Heart right ventricle (tissue), 16 donors: ENCODE measurements at regions of chr9 and their contacts with region 1.

Region 1: DNA sequence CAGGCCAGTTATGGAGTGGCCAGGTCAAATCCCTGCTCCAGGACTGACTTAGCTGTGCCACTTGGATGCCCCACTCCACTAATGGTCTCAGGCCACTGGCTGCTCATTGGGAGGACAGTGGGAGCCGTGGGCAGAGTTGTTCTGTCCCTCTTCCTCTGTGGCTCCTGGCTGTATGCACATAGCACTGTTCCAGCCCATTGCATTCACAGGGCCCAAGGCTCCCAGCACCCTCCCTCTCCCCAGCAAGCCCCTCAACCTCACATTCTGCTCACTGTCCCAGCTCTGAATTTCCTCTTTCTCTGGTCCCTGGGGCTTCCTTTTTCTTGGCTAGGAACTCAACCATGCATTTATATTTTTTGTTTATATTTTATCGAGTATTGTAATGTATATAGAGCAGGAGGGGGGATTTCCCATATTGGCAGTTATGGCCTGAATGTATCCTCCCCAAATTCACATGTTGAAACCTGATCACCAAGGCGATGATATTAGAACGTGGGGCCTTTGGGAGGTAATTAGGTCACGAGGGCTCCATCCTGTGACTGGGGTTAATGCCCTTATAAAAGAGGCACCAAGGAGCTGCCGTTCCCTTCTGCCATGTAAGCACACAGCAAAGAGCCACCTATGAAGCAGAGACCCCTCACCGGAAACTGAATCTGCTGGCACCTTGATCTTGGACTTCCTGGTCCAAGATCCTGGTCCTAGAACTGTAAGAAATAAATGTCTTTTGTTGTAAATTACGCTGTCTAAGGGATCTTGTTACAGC is 17.0 kb upstream of the MVB12B start:
- DNase-seq: no peak
- ATAC-seq: no peak
- H3K4me3 ChIP-seq: no peak overlapping the region
- H3K27ac ChIP-seq: no peak overlapping the region
- H3K4me1 ChIP-seq: no peaks in the 10 kb centered on the region
- H3K27me3 ChIP-seq: peaks cover 0 to 3% (median 0%) of the 10 kb centered on the region in 7 donors
- CTCF ChIP-seq: no peak

Region 2: GRCh38 chr9:126386088-126386487 is 76.5 kb after region 1 on chr9:
- intact Hi-C with region 1: loop called in 1 of 10 experiments (anchors 5 kb)
- DNase-seq: no peak
- ATAC-seq: peak in 4 of 8 donors; percentile 27 to 57 (median 39)
- H3K4me3 ChIP-seq: no peak overlapping the region
- H3K27ac ChIP-seq: no peak overlapping the region
- H3K4me1 ChIP-seq: peaks cover 0 to 47% (median 4%) of the 10 kb centered on the region in 9 donors
- H3K27me3 ChIP-seq: no peaks in the 10 kb centered on the region
- CTCF ChIP-seq: peak in 6 of 9 donors; percentile 23 to 44 (median 36)